ENCODE measurements at regions of chr11 and their contacts with region 1.

Region 1: DNA sequence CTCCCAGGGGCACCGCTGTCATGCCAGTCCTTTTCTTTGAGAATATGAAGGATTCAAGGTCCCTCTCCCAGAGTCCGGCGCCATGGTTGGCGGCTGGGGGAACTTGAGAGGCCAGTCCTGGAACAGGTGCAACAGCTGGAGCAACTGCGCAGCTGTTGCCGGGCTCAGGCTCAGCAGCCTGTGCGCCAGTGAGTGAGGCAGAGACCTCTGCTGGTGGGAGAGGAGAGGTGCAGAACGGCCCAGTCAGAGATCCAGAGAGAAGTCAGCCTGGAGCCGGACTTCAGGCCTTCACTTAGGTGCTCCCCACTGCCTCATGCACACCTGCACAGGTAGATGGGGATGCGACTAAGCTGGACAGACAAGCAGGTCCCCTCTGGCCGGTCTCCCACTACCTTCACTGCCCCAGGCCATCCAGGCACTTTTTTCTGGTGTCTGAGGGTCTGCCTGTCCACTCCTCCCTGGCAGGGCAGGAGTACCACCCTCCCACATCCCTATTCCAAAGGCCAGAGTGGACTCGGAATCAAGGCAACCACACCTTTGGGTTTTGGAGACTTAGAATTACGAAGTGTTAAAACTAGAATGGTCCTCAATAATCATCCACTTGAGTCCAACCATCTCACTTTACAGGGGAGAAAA is 4.6 kb downstream of the CHRDL2 start:
- DNase-seq: peak; percentile 84 to 89
- H3K4me3 ChIP-seq: no peak overlapping the region
- H3K4me3 Mint-ChIP-seq: no peak overlapping the region
- H3K27ac Mint-ChIP-seq: no peak overlapping the region
- H3K4me1 ChIP-seq: 0 out of 2 replicates have a peak, but pooled peaks cover 7% of the 10 kb centered on the region
- H3K4me1 Mint-ChIP-seq: peaks cover 13% of the 10 kb centered on the region
- H3K27me3 ChIP-seq: no peaks in the 10 kb centered on the region
- H3K27me3 Mint-ChIP-seq: peaks cover 15% of the 10 kb centered on the region
- CTCF ChIP-seq: peak; percentile 98 to 100

Region 2: GRCh38 chr11:74611369-74611861 is 115.2 kb before region 1 on chr11:
- CTCF ChIA-PET with region 1: no interaction called
- POLR2A ChIA-PET with region 1: no interaction called
- intact Hi-C with region 1: loop called (anchors 1 kb)
- DNase-seq: peak in 1 of 2 experiments; percentile 43
- H3K4me3 ChIP-seq: no peak overlapping the region
- H3K4me3 Mint-ChIP-seq: no peak overlapping the region
- H3K27ac Mint-ChIP-seq: no peak overlapping the region
- H3K4me1 ChIP-seq: no peaks in the 10 kb centered on the region; the same call in none of the 2 replicates
- H3K4me1 Mint-ChIP-seq: no peaks in the 10 kb centered on the region
- H3K27me3 ChIP-seq: no peaks in the 10 kb centered on the region
- H3K27me3 Mint-ChIP-seq: no peaks in the 10 kb centered on the region
- CTCF ChIP-seq: peak; percentile 67 to 70

Region 3: DNA sequence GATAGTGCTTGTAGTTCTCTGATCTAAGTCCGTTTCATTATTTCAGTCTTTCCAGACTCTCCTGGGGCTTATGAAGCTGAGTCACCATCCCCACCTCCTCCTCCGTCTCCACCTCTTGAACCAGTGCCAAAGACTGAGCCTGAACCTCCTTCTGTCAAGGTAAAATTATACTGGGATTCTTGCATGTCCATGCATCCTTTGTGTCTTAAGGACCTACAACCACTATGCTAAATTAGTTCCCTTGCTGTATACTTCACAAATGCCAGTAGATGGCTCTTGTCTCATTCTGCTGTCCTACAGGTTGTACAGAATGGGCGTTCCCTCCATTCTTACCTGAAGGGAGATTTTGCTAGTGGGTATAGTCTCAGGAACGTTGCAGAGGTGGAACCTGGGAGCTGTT is 92.1 kb before region 1 on chr11:
- CTCF ChIA-PET with region 1: interaction called, 3 read pairs
- POLR2A ChIA-PET with region 1: no interaction called
- intact Hi-C with region 1: loop called (anchors 1 kb)
- DNase-seq: peak in 1 of 2 experiments; percentile 41
- H3K4me3 ChIP-seq: no peak overlapping the region
- H3K4me3 Mint-ChIP-seq: no peak overlapping the region
- H3K27ac Mint-ChIP-seq: no peak overlapping the region
- H3K4me1 ChIP-seq: no peaks in the 10 kb centered on the region
- H3K4me1 Mint-ChIP-seq: no peaks in the 10 kb centered on the region
- H3K27me3 ChIP-seq: no peaks in the 10 kb centered on the region
- H3K27me3 Mint-ChIP-seq: no peaks in the 10 kb centered on the region
- CTCF ChIP-seq: peak; percentile 43 to 65

Measured in Caco-2 (cell line).